Activated T-helper 2 cell treated with anti-CD3 and anti-CD28 coated beads, Interferon-gamma antibody, Interleukin-2, Interleukin-4, amounts not matched to agents 10 μg/mL and 5 μg/mL and 100 μg/mL, durations not matched to agents 14 hours and 24 hours and 36 hours (primary cell): ENCODE measurements at regions of chr15 and their contacts with region 1.

Region 1: GRCh38 chr15:92803847-92804609 is 96.1 kb upstream of the CHD2 start:
- DNase-seq: peak; percentile 40
- H3K4me3 Mint-ChIP-seq: no peak overlapping the region
- H3K27ac Mint-ChIP-seq: peak overlapping the region; percentile 86
- H3K4me1 Mint-ChIP-seq: peaks cover 32% of the 10 kb centered on the region
- H3K27me3 Mint-ChIP-seq: no peaks in the 10 kb centered on the region

Region 2: DNA sequence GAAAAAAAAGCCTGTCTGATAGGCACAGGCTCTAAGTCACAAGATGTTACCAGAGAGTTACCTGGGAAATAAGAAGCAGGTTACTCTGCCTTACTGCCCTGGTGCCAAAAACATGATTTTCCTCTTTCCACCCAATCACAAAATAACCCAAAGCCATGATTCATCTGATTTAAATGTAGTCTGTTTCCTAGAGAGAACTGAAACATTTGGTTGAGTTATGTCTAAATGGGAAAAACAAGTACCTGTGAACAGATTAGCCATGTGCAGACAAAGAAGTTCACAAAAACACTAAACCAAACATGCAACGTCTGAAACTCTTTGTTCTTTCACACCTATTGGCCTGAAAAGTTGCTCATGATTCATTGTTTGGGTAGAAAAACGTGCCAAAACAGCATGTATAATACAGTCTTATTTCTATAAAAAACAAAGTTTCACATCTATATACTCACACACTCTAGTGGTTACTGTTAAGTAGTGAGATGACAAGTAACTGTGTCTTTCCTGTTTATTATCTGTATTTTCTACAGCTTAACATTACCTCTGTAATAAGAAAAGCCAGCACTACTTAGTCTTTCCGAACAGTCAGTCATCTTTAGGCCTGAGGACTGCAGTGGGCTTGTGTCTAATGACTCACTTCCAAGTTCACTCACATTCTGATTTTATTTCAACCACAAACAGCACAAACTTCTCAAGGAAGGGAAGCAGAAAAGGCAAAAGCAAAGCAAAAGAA is 178.6 kb before region 1 on chr15:
- intact Hi-C with region 1: loop called (anchors 1 kb)
- DNase-seq: no peak
- H3K4me3 Mint-ChIP-seq: peak overlapping the region; percentile 19
- H3K27ac Mint-ChIP-seq: peak overlapping the region; percentile 86
- H3K4me1 Mint-ChIP-seq: peaks cover 12% of the 10 kb centered on the region
- H3K27me3 Mint-ChIP-seq: peaks cover 2% of the 10 kb centered on the region

Region 3: GRCh38 chr15:92853222-92853621 is 49.2 kb after region 1 on chr15:
- intact Hi-C with region 1: no loop called
- DNase-seq: no peak
- H3K4me3 Mint-ChIP-seq: no peak overlapping the region
- H3K27ac Mint-ChIP-seq: no peak overlapping the region
- H3K4me1 Mint-ChIP-seq: peaks cover 14% of the 10 kb centered on the region
- H3K27me3 Mint-ChIP-seq: no peaks in the 10 kb centered on the region

Region 4: DNA sequence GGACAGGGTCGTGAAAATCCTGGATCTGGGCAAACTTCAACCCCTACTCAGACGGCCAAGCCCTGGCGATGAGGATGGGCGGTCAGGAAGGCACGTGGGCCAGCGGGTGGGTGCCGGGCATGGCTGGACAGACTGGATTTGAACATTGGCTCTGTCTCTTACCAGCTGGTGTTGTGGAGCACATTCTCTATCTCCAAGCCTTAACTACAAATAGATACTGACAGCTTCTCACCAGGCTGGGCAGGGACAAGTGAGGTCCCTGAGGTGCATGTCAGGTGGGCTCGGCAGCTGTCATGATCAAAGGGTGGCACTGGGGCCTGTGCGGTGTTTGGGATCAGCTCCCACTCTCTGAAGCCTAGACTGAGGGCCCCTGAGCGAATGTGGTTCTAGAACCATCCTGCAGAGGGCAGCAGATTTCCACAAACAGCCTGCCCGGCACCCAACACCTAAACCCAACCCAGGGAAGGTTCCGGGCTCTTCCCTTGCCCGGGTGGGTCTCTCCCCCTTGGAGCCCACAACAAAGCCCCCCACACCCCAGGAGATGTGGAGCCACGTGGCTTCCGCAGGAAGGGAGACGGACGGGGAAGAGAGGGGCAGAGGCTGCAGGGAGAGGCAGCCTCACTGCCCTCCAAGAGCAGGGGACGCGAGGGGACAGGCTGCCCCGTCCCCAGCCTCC is 226.5 kb after region 1 on chr15:
- intact Hi-C with region 1: loop called (anchors 5 kb)
- DNase-seq: peak; percentile 55
- H3K4me3 Mint-ChIP-seq: no peak overlapping the region
- H3K27ac Mint-ChIP-seq: no peak overlapping the region
- H3K4me1 Mint-ChIP-seq: peaks cover 3% of the 10 kb centered on the region
- H3K27me3 Mint-ChIP-seq: no peaks in the 10 kb centered on the region